Gastrocnemius medialis (tissue), 4 donors: ENCODE measurements at regions of chr9 and their contacts with region 1.

Region 1: GRCh38 chr9:112717661-112718341 is at the start of gene INIP:
- DNase-seq: peak; percentile 91 to 94
- ATAC-seq: peak; percentile 99
- H3K4me3 ChIP-seq: peak within 1 kb of the TSS; percentile 76 to 96 (median 84)
- H3K27ac ChIP-seq: peak within 1 kb of the TSS; percentile 86 to 95 (median 90)
- H3K4me1 ChIP-seq: peaks cover 5 to 11% of the 10 kb centered on the region in 2 donors
- H3K27me3 ChIP-seq: no peaks in the 10 kb centered on the region
- CTCF ChIP-seq: peak in 1 of 5 experiments; percentile 21
- POLR2A ChIP-seq: peak; percentile 66 to 74
- total RNA-seq, gene INIP: 6.0 to 13.4 (median 7.8) TPM

Region 2: GRCh38 chr9:112379177-112380101 is 338.4 kb before region 1 on chr9:
- in situ Hi-C with region 1: no loop called
- intact Hi-C with region 1: loop called (anchors 2 kb)
- DNase-seq: peak; percentile 99 to 100
- ATAC-seq: peak; percentile 81 to 84
- H3K4me3 ChIP-seq: peak overlapping the region; percentile 89 to 99 (median 93)
- H3K27ac ChIP-seq: peak overlapping the region; percentile 93 to 99 (median 97)
- H3K4me1 ChIP-seq: peaks cover 43 to 50% of the 10 kb centered on the region in 2 donors
- H3K27me3 ChIP-seq: no peaks in the 10 kb centered on the region
- CTCF ChIP-seq: peak in 2 of 5 experiments; percentile 13 to 21
- POLR2A ChIP-seq: peak; percentile 91 to 95

Region 3: GRCh38 chr9:112631313-112632070 is 86.3 kb before region 1 on chr9:
- in situ Hi-C with region 1: no loop called
- intact Hi-C with region 1: no loop called
- DNase-seq: no peak
- ATAC-seq: no peak
- H3K4me3 ChIP-seq: no peak overlapping the region
- H3K27ac ChIP-seq: no peak overlapping the region
- H3K4me1 ChIP-seq: no peaks in the 10 kb centered on the region
- H3K27me3 ChIP-seq: no peaks in the 10 kb centered on the region
- CTCF ChIP-seq: no peak
- POLR2A ChIP-seq: no peak

Region 4: DNA sequence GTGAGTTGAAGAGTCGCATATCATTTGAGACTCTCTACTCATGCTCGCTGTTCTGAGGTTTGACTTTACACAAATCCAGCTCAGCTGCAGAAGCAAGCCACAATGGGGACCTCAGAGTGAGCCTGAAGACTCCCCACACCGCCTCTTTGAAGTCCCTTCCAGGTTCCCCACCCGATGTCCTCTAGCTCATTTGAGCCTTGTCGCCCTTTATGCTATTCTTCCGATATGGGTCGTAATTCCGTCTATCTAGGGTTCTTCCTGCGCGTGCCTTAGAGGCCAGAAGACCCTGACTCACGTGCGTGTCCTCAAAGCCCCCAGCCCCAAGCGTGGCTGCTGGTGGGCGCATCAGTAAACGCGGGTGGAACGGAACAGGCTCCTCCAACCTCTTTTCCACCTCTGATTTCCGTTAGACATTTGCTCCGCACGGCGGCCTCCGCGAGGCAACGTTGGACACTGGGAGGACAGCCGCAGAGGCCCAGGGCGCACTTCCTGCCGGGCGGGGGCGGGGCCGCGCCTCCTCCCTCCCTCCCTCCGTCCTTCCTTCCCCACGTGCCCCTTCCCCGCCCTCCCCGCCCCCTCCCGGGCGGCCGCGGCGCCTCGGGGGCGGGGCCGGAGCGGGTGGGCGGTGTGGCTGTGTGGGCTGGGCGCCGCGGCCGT is 32.4 kb after region 1 on chr9 and contains the start of gene SNX30:
- in situ Hi-C with region 1: no loop called
- intact Hi-C with region 1: loop called (anchors 1 kb)
- DNase-seq: peak; percentile 81 to 89
- ATAC-seq: peak; percentile 91 to 93
- H3K4me3 ChIP-seq: peak within 1 kb of the TSS; percentile 73 to 95 (median 80)
- H3K27ac ChIP-seq: peak within 1 kb of the TSS; percentile 75 to 83 (median 80)
- H3K4me1 ChIP-seq: peaks cover 7 to 13% of the 10 kb centered on the region in 2 donors
- H3K27me3 ChIP-seq: no peaks in the 10 kb centered on the region
- CTCF ChIP-seq: peak in 1 of 5 experiments; percentile 20
- POLR2A ChIP-seq: peak; percentile 44 to 48
- total RNA-seq, gene SNX30: 2.3 to 6.1 (median 3.9) TPM

Region 5: DNA sequence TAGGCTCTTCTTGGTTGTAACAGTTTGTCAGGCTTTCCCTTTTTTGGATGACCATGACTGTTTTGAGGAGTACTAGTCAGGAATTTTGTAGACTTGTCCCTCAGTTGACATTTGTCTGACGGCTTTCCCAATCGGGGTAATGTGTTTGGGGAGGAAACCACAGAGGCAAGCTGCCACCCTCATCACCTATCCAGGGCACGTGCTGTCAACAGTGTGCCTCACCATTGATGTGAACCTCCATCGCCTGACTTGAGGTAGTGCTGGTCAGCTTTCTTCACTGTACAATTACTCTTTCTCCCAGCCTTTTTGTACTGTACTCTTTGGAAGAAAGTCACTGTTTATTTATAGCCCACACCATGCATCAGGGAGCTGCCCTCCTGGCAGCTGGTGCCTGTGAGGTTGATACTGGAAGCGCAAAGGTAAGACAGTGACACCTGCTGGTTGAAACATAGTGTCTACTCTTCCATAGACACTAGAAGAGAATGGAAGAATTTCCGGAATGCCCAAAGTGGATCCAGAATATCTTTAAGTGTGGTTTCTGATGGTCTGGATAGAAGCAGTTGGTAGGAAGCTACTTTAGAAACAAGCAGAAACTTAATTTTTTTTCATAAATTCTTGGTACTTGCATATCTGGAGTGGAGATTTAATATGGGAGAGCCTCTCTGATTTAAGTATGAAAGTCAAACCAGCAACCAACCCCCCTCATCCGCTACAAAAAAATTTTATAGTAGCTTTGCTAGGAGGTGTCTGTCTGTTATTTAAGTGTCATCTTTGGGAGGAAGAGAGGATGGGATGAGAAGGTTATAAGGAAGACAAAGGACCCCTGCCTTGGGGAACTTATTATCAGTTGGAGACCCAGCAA is 102.1 kb after region 1 on chr9:
- in situ Hi-C with region 1: no loop called
- intact Hi-C with region 1: loop called (anchors 1 kb)
- DNase-seq: peak; percentile 50 to 76
- ATAC-seq: peak; percentile 97 to 99
- H3K4me3 ChIP-seq: no peak overlapping the region
- H3K27ac ChIP-seq: peak overlapping the region in 3 of 4 donors; percentile 26 to 50 (median 47)
- H3K4me1 ChIP-seq: peaks cover 3 to 5% of the 10 kb centered on the region in 2 donors
- H3K27me3 ChIP-seq: no peaks in the 10 kb centered on the region
- CTCF ChIP-seq: peak; percentile 55 to 78 (median 70)
- POLR2A ChIP-seq: no peak

Region 6: GRCh38 chr9:113150670-113151611 is 433.1 kb after region 1 on chr9 and contains the start of gene SLC31A2:
- in situ Hi-C with region 1: no loop called
- intact Hi-C with region 1: loop called (anchors 1 kb)
- DNase-seq: peak; percentile 81 to 86
- ATAC-seq: peak; percentile 81 to 82
- H3K4me3 ChIP-seq: peak within 1 kb of the TSS; percentile 95 to 99 (median 96)
- H3K27ac ChIP-seq: peak within 1 kb of the TSS; percentile 84 to 94 (median 92)
- H3K4me1 ChIP-seq: peaks cover 18 to 42% of the 10 kb centered on the region in 2 donors
- H3K27me3 ChIP-seq: no peaks in the 10 kb centered on the region
- CTCF ChIP-seq: peak in 3 of 5 experiments; percentile 23 to 32 (median 28)
- POLR2A ChIP-seq: peak; percentile 70 to 80
- total RNA-seq, gene SLC31A2: 17.5 to 29.6 (median 23.9) TPM